A673 (cell line): ENCODE measurements at regions of chr21 and their contacts with region 1.

Region 1: GRCh38 chr21:25607151-25608043 is at the start of gene MRPL39:
- DNase-seq: peak; percentile 95
- H3K4me3 ChIP-seq: peak within 1 kb of the TSS; percentile 86
- H3K27ac ChIP-seq: peak within 1 kb of the TSS; percentile 94
- H3K4me1 ChIP-seq: peaks cover 4% of the 10 kb centered on the region
- H3K27me3 ChIP-seq: no peaks in the 10 kb centered on the region
- CTCF ChIP-seq: peak; percentile 81
- total RNA-seq, gene MRPL39: 57.1 and 57.6 TPM in 2 replicates

Region 2: GRCh38 chr21:25708467-25709065 is 101.2 kb after region 1 on chr21:
- CTCF ChIA-PET with region 1: no interaction called
- POLR2A ChIA-PET with region 1: no interaction called
- intact Hi-C with region 1: loop called (anchors 1 kb)
- DNase-seq: peak; percentile 56
- H3K4me3 ChIP-seq: no peak overlapping the region
- H3K27ac ChIP-seq: no peak overlapping the region
- H3K4me1 ChIP-seq: peaks cover 6% of the 10 kb centered on the region
- H3K27me3 ChIP-seq: no peaks in the 10 kb centered on the region
- CTCF ChIP-seq: peak; percentile 84

Region 3: DNA sequence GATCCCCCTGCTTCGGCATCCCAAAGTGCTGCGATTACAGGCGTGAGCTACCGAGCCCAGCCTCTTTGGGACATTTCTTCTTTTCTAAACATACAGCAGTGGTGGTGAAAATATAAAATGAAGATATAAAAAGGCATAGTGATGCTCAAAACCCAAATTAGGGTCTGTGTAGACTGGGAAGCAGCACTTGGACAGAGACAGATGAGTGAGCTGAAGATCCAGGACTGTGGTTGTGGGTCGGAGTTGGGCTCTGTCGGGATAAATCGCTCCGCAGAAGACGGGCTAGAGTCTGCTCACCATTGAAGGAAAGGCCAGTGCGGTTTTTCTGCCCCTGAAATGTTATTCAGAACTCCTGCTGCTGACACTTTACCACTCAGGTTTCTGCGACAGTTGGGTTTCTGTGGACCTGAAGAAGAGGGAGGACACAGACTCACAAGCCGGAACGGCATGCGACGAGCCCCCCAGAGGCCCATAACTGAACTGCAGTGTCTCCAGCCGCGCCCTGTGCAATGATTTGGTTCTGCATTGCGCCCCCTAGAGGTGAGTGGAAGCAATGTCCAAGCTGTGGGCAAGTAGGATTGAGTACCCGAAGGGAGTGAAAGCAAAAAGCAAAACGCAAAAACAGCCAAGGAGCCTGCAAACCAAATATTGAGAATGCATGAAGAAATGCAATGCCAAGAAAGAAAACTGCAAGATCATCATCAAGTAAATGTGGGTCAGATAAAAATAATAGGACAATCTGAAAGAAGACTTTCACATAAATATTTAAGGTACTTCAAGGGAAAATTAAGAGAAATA is 194.0 kb after region 1 on chr21:
- CTCF ChIA-PET with region 1: interaction called, 3 read pairs
- POLR2A ChIA-PET with region 1: no interaction called
- intact Hi-C with region 1: loop called (anchors 1 kb)
- DNase-seq: peak; percentile 95
- H3K4me3 ChIP-seq: no peak overlapping the region
- H3K27ac ChIP-seq: no peak overlapping the region
- H3K4me1 ChIP-seq: no peaks in the 10 kb centered on the region
- H3K27me3 ChIP-seq: no peaks in the 10 kb centered on the region
- CTCF ChIP-seq: peak; percentile 100

Region 4: DNA sequence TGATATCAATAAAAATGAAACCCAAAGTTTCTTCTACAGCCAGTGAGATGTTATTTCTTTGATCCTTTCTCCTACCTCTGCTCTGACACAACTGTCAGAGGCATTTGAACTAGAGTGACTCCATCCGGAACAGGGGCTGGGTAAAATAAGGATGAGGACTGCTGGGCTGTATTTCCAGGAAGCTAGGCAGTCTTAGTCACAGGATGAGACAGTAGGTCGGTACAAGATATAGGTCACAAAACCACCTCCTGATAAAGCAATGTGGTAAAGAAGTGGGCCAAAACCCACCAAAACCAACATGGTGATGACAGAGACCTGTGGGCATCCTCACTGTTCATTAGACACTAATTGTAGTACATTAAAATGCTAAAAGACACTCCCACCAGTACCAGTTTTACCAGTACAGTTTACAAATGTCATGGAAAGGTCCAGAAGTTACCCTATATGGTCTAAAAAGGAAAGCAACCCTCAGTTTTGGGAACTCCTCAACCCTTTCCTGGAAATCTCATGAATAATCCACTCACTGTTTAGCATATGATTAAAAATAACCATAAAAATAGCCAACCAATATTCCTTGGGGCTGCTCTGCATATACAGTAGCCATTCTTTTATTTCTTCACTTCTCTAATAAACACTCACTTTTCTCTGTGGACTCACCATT is 224.0 kb after region 1 on chr21:
- CTCF ChIA-PET with region 1: no interaction called
- POLR2A ChIA-PET with region 1: no interaction called
- intact Hi-C with region 1: no loop called
- DNase-seq: no peak
- H3K4me3 ChIP-seq: no peak overlapping the region
- H3K27ac ChIP-seq: no peak overlapping the region
- H3K4me1 ChIP-seq: no peaks in the 10 kb centered on the region
- H3K27me3 ChIP-seq: no peaks in the 10 kb centered on the region
- CTCF ChIP-seq: no peak

Region 5: GRCh38 chr21:25944672-25945213 is 337.3 kb after region 1 on chr21:
- CTCF ChIA-PET with region 1: no interaction called
- POLR2A ChIA-PET with region 1: no interaction called
- intact Hi-C with region 1: no loop called
- DNase-seq: no peak
- H3K4me3 ChIP-seq: no peak overlapping the region
- H3K27ac ChIP-seq: no peak overlapping the region
- H3K4me1 ChIP-seq: peaks cover 6% of the 10 kb centered on the region
- H3K27me3 ChIP-seq: no peaks in the 10 kb centered on the region
- CTCF ChIP-seq: no peak

Region 6: DNA sequence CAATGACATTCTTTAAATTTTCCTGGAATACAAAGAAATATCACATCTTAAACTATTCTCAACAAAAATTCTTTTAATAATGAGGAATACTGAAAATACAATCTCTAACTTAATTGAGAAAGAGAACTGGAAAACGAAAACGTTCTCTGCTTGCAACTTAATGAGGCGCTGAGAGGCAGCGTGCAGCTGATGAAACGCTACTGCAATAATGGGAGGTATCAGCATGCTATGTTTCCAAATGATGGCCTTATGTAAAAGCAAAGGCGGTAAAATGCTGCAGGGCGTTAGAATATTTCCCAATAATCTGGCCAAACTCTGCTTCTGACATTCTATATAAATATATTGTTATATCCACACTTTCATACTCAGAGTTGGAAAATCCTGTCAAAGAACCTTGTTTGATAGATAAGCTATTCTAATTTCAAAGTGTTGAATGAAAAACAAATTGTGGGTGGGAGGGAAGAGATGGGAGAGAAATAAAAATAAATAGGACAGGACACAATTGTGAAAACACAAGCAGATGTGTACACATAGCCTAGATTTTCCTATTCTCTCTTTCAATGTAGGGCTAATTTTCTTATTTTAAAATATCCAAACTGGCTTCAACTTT is 492.3 kb after region 1 on chr21:
- CTCF ChIA-PET with region 1: no interaction called
- POLR2A ChIA-PET with region 1: no interaction called
- intact Hi-C with region 1: no loop called
- DNase-seq: peak; percentile 74
- H3K4me3 ChIP-seq: peak overlapping the region; percentile 20
- H3K27ac ChIP-seq: peak overlapping the region; percentile 86
- H3K4me1 ChIP-seq: peaks cover 42% of the 10 kb centered on the region
- H3K27me3 ChIP-seq: no peaks in the 10 kb centered on the region
- CTCF ChIP-seq: no peak

Region 7: GRCh38 chr21:26288026-26288425 is 680.6 kb after region 1 on chr21:
- CTCF ChIA-PET with region 1: no interaction called
- POLR2A ChIA-PET with region 1: no interaction called
- intact Hi-C with region 1: no loop called
- DNase-seq: no peak
- H3K4me3 ChIP-seq: no peak overlapping the region
- H3K27ac ChIP-seq: no peak overlapping the region
- H3K4me1 ChIP-seq: no peaks in the 10 kb centered on the region
- H3K27me3 ChIP-seq: no peaks in the 10 kb centered on the region
- CTCF ChIP-seq: no peak

Region 8: GRCh38 chr21:26715878-26716506 is 1108.6 kb after region 1 on chr21:
- CTCF ChIA-PET with region 1: no interaction called
- POLR2A ChIA-PET with region 1: no interaction called
- intact Hi-C with region 1: loop called (anchors 2 kb)
- DNase-seq: peak; percentile 73
- H3K4me3 ChIP-seq: no peak overlapping the region
- H3K27ac ChIP-seq: no peak overlapping the region
- H3K4me1 ChIP-seq: peaks cover 13% of the 10 kb centered on the region
- H3K27me3 ChIP-seq: no peaks in the 10 kb centered on the region
- CTCF ChIP-seq: peak; percentile 88